Activated CD4-positive, alpha-beta memory T cell treated with anti-CD3 and anti-CD28 coated beads, Interleukin-2, amount 10 ng/mL, durations not matched to agents 7 days and 5 days (primary cell): ENCODE measurements at regions of chr2 and their contacts with region 1.

Region 1: GRCh38 chr2:201231781-201232466 is 28.4 kb upstream of the CASP8 start:
- DNase-seq: peak; percentile 92
- H3K4me3 Mint-ChIP-seq: peak overlapping the region; percentile 97
- H3K27ac Mint-ChIP-seq: peak overlapping the region; percentile 97
- H3K4me1 Mint-ChIP-seq: peaks cover 58% of the 10 kb centered on the region
- H3K27me3 Mint-ChIP-seq: no peaks in the 10 kb centered on the region

Region 2: GRCh38 chr2:200888704-200889625 is 343.0 kb before region 1 on chr2 and contains the starts of genes NIF3L1 and PPIL3:
- CTCF ChIA-PET with region 1: interaction called, 14 read pairs
- POLR2A ChIA-PET with region 1: interaction called, 31 read pairs
- DNase-seq: peak; percentile 98
- H3K4me3 Mint-ChIP-seq: peak within 1 kb of the TSS; percentile 89
- H3K27ac Mint-ChIP-seq: peak within 1 kb of the TSS; percentile 99
- H3K4me1 Mint-ChIP-seq: peaks cover 58% of the 10 kb centered on the region
- H3K27me3 Mint-ChIP-seq: no peaks in the 10 kb centered on the region
- total RNA-seq, gene NIF3L1: 28.9 to 30.1 TPM
- total RNA-seq, gene PPIL3: 101 to 102 TPM

Region 3: GRCh38 chr2:201040867-201041628 is 190.9 kb before region 1 on chr2:
- CTCF ChIA-PET with region 1: no interaction called
- POLR2A ChIA-PET with region 1: no interaction called
- DNase-seq: no peak
- H3K4me3 Mint-ChIP-seq: no peak overlapping the region
- H3K27ac Mint-ChIP-seq: no peak overlapping the region
- H3K4me1 Mint-ChIP-seq: peaks cover 3% of the 10 kb centered on the region
- H3K27me3 Mint-ChIP-seq: no peaks in the 10 kb centered on the region

Region 4: DNA sequence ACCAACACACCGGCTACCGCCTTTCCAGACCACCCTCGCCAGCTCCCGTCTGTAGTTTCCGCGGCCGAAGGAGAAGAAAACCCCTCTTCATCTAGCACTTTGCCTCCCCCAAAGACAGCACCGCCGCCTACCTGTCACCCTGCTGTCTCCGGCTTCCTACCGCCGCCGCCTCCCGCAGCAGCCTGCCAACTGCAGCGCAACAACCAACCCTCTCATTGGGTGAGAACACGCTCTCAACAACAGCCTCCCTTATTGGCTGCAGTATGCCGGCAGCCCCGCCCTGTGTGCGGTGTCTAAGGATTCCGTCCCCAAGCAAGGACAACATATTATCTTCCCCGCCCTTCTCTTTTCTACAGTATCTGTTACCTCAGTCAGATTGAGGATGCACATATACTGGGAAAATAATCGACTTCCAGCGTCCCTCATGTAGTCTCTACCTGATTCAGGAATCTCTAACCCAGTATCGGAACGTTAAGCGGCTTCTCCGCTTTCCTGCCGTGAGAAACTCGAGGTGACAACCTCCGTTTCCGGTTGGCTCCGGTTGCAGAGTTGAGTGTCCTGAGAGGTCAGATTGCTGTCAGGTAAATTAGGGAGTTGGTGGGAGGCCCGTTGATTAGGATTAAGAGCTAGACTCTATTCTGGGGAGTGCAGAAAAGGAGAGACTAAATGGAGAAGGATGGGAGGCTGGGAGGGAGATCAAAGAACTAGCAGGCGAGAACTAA is 160.3 kb before region 1 on chr2 and contains the starts of genes HYCC2 and NDUFB3:
- CTCF ChIA-PET with region 1: interaction called, 30 read pairs
- POLR2A ChIA-PET with region 1: interaction called, 11 read pairs
- DNase-seq: peak; percentile 95
- H3K4me3 Mint-ChIP-seq: peak within 1 kb of the TSS; percentile 96
- H3K27ac Mint-ChIP-seq: peak within 1 kb of the TSS; percentile 88
- H3K4me1 Mint-ChIP-seq: peaks cover 57% of the 10 kb centered on the region
- H3K27me3 Mint-ChIP-seq: no peaks in the 10 kb centered on the region
- total RNA-seq, gene HYCC2: 27.9 to 31.9 TPM
- total RNA-seq, gene NDUFB3: 133 to 135 TPM

Region 5: DNA sequence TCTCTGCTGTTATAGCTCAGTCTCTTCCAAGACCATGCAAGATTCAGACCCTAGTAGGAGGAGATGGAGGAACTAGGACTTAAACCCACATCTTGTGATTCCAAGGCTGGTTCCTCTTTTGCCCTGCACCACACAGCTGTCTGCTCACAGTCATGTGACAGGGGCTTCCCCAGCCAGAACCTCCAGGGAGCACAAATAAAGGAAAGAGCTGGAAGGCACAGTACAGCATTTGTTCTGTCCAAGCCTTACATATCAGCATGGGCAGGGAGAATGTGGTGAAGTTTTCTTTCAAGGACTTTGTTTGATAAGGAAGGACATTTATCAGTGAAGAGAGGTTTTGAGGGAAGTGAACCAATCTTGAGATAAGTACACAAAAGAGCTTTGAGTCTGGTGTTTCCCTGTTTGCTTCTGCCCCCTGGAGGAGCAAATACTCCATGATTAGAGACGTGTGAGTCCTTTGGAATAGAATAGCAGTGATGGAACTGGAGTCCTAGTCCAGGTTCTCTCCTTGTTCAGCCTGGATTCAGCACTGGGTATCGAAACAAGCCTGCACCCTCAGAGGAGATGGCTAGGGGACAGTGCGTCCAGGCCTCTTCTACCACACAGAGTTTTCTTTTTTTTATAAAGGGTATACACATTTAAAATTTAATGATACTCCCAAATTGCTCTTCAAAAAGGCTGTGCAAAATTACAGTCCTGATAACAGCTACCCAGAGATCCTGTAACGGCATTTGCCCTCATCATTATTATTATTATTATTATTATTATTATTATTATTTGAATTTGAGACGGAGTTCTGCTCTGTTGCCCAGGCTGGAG is 73.6 kb before region 1 on chr2:
- CTCF ChIA-PET with region 1: interaction called, 21 read pairs
- POLR2A ChIA-PET with region 1: no interaction called
- DNase-seq: peak; percentile 63
- H3K4me3 Mint-ChIP-seq: no peak overlapping the region
- H3K27ac Mint-ChIP-seq: peak overlapping the region; percentile 50
- H3K4me1 Mint-ChIP-seq: peaks cover 15% of the 10 kb centered on the region
- H3K27me3 Mint-ChIP-seq: no peaks in the 10 kb centered on the region

Region 6: DNA sequence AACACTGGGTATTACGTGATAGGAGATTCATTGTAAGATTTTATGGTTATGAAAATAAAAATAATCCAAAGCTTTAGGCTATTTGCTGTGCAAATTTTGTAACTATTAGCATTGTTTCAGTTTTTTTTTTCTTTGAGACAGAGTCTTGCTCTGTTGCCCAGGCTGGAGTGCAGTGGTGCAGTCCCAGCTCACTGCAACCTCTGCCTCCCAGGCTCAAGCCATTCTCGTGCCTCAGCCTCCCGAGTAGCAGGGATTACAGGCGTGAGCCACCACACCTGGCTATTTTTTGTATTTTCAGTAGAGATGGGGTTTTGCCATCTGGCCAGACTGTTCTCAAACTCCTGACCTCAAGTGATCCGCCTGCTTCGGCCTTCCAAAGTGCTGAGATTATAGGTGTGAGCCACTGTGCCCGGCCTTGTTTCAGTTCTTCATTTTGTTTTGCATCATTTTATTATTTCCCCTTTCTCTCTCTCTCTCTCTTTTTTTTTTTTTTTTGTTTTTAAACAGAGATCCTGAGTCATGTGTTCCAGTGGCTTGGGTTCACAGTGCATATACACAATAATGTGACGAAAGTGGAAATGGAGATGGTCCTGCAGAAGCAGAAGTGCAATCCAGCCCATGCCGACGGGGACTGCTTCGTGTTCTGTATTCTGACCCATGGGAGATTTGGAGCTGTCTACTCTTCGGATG is 23.2 kb before region 1 on chr2:
- CTCF ChIA-PET with region 1: interaction called, 27 read pairs
- POLR2A ChIA-PET with region 1: interaction called, 6 read pairs
- DNase-seq: no peak
- H3K4me3 Mint-ChIP-seq: no peak overlapping the region
- H3K27ac Mint-ChIP-seq: no peak overlapping the region
- H3K4me1 Mint-ChIP-seq: peaks cover 35% of the 10 kb centered on the region
- H3K27me3 Mint-ChIP-seq: no peaks in the 10 kb centered on the region

Region 7: GRCh38 chr2:201270293-201271001 is 38.5 kb after region 1 on chr2:
- CTCF ChIA-PET with region 1: interaction called, 105 read pairs
- POLR2A ChIA-PET with region 1: interaction called, 290 read pairs
- DNase-seq: no peak
- H3K4me3 Mint-ChIP-seq: no peak overlapping the region
- H3K27ac Mint-ChIP-seq: no peak overlapping the region
- H3K4me1 Mint-ChIP-seq: peaks cover 76% of the 10 kb centered on the region
- H3K27me3 Mint-ChIP-seq: no peaks in the 10 kb centered on the region

Region 8: GRCh38 chr2:201451292-201452057 is 219.6 kb after region 1 on chr2 and contains the starts of genes STRADB and TRAK2:
- CTCF ChIA-PET with region 1: interaction called, 12 read pairs
- POLR2A ChIA-PET with region 1: interaction called, 24 read pairs
- DNase-seq: peak; percentile 97
- H3K4me3 Mint-ChIP-seq: peak within 1 kb of the TSS; percentile 95
- H3K27ac Mint-ChIP-seq: peak within 1 kb of the TSS; percentile 96
- H3K4me1 Mint-ChIP-seq: peaks cover 53% of the 10 kb centered on the region
- H3K27me3 Mint-ChIP-seq: no peaks in the 10 kb centered on the region
- total RNA-seq, gene STRADB: 18.9 to 19.2 TPM
- total RNA-seq, gene TRAK2: 47.3 to 49.3 TPM